H1 (cell line): ENCODE measurements at regions of chr5 and their contacts with region 1.

Region 1: DNA sequence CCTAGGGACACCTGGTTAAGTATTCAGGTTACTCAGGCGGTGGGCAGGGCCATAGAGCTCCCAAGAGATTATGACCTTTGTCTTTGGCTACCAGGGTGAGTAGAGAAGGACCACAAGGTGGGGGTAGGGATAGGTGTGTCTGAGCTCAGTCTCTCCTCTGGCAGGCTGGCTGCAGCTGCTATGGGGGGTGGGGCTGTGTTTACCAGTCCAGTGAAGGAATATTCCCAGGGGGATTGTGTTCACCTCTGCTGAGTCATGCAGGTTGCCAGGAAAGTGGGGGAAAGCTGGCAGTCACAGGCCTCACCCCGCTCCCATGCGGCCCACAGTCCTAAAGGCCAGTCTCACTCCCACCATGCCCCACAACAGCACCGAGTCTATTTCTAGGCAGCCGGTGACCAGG is 53.6 kb upstream of the POU5F2 start:
- DNase-seq: no peak
- H3K4me3 ChIP-seq: no peak overlapping the region
- H3K27ac ChIP-seq: no peak overlapping the region
- H3K4me1 ChIP-seq: no peaks in the 10 kb centered on the region; a peak in 1 of 7 replicates
- H3K27me3 ChIP-seq: 0 out of 7 replicates have a peak, but pooled peaks cover 0 to 2% (median 0%) of the 10 kb centered on the region in 4 experiments
- CTCF ChIP-seq: no peak
- EP300 ChIP-seq: no peak
- POLR2A ChIP-seq: no peak
- RAD21 ChIP-seq: no peak

Region 2: GRCh38 chr5:93782978-93783377 is 12.0 kb before region 1 on chr5:
- CTCF ChIA-PET with region 1: interaction called, 26 read pairs
- POLR2A ChIA-PET with region 1: no interaction called
- DNase-seq: no peak
- H3K4me3 ChIP-seq: no peak overlapping the region
- H3K27ac ChIP-seq: no peak overlapping the region
- H3K4me1 ChIP-seq: no peaks in the 10 kb centered on the region
- H3K27me3 ChIP-seq: peaks cover 0 to 2% (median 0%) of the 10 kb centered on the region in 4 experiments; a peak in 1 of 7 replicates
- CTCF ChIP-seq: no peak
- EP300 ChIP-seq: no peak
- POLR2A ChIP-seq: no peak
- RAD21 ChIP-seq: no peak